ENCODE measurements at regions of chr1 and their contacts with region 1.

Region 1: DNA sequence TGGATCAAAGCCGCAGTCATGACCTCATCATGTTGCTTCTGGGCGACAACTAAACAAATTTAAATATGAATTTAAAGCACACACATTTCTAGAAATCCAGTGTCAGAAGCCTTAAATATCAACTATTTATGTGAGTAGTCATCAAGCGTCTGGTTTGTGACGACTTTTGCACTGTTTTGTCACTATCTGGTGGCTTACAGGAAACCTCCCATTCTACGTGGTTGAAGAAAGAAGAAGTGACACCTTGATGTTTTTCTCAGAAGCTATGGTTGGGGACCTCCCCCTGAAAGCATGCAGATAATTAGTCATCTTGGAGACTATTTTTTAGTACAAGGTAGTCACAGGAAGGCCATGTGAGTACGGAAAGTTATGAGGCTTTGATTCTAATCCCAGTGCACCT is 58.5 kb downstream of the TENT5C start:
- DNase-seq: peak; percentile 93
- H3K4me3 ChIP-seq: peak overlapping the region; percentile 30
- H3K27ac ChIP-seq: peak overlapping the region; percentile 91
- H3K4me1 ChIP-seq: peaks cover 84% of the 10 kb centered on the region
- CTCF ChIP-seq: no peak

Region 2: DNA sequence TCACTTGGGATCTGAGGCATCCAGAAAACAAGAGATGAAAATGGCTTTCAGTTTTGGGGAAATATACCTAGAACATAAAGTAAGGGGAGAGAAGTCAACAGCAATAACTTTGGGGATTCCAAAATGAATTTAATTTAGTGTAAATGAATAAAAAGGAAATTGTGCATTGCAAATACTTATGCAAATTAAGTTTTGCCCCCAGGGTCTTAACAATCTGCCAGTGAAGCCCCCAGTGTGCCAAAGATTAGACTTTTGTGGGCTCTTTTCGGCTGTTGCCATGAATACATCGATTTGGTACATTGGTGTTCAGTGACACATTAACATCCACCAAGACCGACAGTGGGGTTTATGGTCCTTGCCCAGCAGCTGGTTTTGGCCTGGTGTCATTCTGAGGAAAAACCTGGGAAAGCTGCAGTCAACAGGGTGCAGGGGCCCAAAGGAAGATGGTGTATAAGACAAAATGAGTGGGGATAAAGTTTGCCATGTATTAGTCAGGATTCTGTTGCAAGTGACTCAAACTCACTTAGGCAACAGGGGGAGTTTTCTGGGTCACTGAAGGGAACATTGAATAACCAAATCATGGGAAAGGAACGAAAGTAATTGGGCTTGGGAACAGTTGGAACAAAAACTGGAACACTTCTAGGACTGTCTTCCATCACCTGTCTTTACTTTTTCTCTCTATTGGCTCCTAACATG is 966.6 kb before region 1 on chr1:
- CTCF ChIA-PET with region 1: no interaction called
- POLR2A ChIA-PET with region 1: no interaction called
- intact Hi-C with region 1: no loop called
- DNase-seq: no peak
- H3K4me3 ChIP-seq: no peak overlapping the region
- H3K27ac ChIP-seq: no peak overlapping the region
- H3K4me1 ChIP-seq: no peaks in the 10 kb centered on the region
- CTCF ChIP-seq: no peak

Region 3: GRCh38 chr1:117367047-117368018 is 297.0 kb before region 1 on chr1 and contains the start of gene MAN1A2:
- CTCF ChIA-PET with region 1: no interaction called
- POLR2A ChIA-PET with region 1: no interaction called
- intact Hi-C with region 1: loop called (anchors 10 kb)
- DNase-seq: peak; percentile 87
- H3K4me3 ChIP-seq: peak within 1 kb of the TSS; percentile 88
- H3K27ac ChIP-seq: peak within 1 kb of the TSS; percentile 74
- H3K4me1 ChIP-seq: peaks cover 40% of the 10 kb centered on the region
- CTCF ChIP-seq: no peak
- total RNA-seq, gene MAN1A2: 16.1 and 18.9 TPM in 2 replicates

Region 4: GRCh38 chr1:117632269-117633067 is 31.8 kb before region 1 on chr1:
- CTCF ChIA-PET with region 1: interaction called, 13 read pairs
- POLR2A ChIA-PET with region 1: interaction called, 760 read pairs
- intact Hi-C with region 1: loop called (anchors 1 kb)
- DNase-seq: peak; percentile 83
- H3K4me3 ChIP-seq: peak overlapping the region; percentile 56
- H3K27ac ChIP-seq: peak overlapping the region; percentile 85
- H3K4me1 ChIP-seq: peaks cover 99% of the 10 kb centered on the region
- CTCF ChIP-seq: no peak